Cardiac septum (tissue), 1 donor: ENCODE measurements at regions of chr5 and their contacts with region 1.

Region 1: GRCh38 chr5:135191084-135191826 is 157.2 kb upstream of the PITX1 start:
- DNase-seq: peak; percentile 85

Region 2: GRCh38 chr5:134917070-134917815 is 274.0 kb before region 1 on chr5:
- intact Hi-C with region 1: loop called (anchors 10 kb)
- DNase-seq: no peak

Region 3: DNA sequence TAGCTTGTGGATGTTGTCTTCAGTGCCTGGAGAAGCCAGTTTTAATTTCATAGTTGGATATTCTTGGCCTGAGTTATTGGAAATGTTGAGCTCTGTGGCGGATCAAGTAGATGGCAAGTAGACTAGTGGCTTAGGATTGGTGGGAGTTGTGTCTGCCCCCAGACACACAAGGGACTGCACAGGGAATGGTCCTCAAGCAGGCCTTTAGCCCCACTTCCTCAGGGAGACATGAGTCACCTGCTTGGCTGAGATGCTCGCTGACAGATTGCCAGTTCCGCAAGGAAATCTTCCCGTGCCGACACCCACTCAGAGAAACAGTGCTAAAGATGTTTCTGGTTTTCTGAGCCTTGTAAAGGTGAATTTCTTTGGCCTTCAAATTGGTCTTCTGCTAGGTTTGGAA is 242.3 kb before region 1 on chr5:
- intact Hi-C with region 1: loop called (anchors 10 kb)
- DNase-seq: no peak

Region 4: GRCh38 chr5:134963098-134963497 is 228.2 kb before region 1 on chr5:
- intact Hi-C with region 1: no loop called
- DNase-seq: no peak

Region 5: DNA sequence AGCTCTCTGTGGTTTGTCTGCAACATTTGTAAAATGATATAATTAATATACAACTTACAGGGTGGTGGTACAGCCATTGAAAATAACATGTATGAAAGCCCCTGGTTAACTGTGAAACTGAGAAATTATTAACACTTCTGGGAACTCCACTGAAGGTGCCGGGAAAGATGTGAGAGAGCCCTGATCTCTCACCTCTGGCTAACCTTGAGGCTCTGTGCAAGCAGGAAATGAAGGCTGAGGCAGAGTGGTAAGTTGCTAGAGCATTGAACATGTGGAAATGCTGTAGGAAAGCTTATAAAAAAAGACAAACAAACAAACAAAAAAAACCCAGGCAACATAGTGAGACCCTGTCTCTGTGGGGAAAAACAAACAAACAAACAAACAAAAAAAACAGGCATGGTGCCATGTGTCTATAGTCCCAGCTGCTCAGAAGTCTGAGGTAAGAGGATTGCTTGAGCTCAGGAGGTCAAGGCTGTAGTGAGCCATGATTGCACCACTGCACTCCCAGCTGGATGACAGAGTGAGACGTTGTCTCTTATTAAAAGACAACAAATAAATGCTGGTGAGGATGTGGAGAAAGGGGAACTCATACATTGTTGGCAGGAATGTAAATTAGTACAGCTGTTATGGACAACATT is 216.1 kb before region 1 on chr5:
- intact Hi-C with region 1: no loop called
- DNase-seq: no peak

Region 6: DNA sequence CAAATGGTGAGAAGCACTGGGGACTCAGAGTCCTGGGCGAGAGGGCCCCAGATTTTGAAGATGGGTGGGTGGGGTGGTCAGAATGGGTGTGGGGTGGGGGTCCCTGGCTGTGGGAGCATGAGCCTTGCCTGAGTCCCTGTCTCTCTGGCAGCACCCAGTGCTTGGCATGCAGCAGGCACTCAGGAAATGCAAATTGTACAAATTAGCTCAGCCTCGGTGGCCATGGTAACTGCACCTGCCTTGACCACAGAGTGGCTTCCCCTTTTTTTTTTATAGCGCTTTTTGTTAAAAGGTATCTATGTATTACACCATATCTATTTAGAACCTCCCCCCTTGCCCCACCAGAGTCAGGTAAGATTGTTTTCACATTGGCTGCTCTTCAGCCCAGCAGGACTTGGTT is 138.0 kb before region 1 on chr5:
- intact Hi-C with region 1: loop called (anchors 10 kb)
- DNase-seq: no peak

Region 7: DNA sequence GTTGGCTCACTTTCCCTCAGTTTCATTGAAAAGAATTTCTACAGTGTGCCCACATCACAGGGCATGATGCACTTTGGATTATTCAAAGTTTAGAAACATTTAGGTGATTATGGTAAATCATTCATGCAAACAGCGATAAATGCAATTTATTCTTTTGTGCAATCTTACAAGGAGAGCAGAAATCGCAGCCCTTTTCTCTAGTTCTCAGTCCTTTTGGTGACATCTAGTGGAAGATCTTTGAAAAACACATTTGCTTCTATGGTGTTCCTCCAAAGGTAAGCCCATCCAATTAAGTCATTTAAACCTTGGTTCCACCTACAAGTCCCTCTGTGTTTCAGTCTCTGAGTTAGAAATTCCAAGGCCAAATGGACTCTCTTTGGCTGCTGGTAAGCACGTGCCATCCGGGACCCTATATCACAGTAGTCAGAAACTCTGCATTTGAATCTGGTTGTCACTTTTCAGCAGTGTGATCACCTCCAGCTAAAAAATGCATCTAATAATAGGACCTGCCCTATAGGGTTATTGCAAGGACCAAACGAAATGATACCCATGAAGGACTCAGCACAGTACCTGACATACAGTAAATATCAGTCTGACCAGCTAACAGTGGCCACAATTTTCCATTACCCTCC is 141.4 kb after region 1 on chr5:
- intact Hi-C with region 1: loop called (anchors 5 kb)
- DNase-seq: no peak